ENCODE measurements at regions of chr7 and their contacts with region 1.

Region 1: DNA sequence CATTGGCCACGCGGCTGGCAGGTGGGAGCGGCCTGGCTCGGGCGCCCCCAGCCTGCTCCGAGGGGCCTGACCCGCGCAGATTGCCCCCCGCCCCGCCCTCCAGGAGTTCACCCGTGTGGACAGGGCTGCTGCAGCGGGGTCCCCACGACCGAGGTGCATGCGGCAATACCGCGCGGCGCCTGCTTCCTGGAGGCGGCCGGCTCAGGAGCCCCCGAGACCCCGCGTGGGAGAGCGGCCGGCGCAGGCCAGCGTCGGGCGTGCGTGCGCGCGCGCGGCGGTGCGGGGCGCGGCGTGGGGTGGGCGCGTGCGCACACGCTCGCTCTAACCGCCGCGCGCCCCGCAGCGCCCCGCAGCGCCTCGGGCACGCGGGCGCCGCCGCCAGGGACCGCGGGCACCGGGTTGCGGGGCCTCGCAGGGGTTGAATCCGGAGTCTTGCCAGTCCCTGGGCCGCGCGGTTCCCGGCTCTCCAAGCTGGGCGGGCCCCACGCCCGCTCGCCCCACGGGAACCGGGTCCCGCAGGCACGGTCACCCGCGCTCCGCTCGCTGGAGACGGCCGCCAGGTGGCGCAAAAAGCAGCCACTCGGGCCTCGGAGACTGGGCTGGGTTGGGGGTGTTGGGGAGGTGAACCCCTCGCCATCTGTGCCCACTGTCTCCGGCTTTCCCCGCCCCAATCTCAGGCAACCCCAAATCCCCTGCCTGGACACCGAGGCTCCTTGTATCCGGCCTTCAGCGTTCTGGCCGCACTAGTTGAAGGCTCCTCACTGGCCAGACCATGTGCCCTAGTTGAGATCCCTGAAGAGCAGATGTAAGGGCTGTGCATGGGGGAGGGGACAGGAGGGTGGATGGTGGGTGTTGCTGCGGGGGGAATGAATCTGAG is 1.3 kb upstream of the ACHE start:
- DNase-seq: peak; percentile 87
- H3K4me3 ChIP-seq: peak overlapping the region; percentile 39 to 61; a peak in 3 of 4 replicates
- H3K27ac ChIP-seq: no peak overlapping the region
- H3K4me1 ChIP-seq: peaks cover 7 to 9% of the 10 kb centered on the region in 2 experiments; a peak in 2 of 4 replicates
- H3K27me3 ChIP-seq: peaks cover 54% of the 10 kb centered on the region
- CTCF ChIP-seq: peak; percentile 95
- EP300 ChIP-seq: no peak
- RAD21 ChIP-seq: peak; percentile 60

Region 2: DNA sequence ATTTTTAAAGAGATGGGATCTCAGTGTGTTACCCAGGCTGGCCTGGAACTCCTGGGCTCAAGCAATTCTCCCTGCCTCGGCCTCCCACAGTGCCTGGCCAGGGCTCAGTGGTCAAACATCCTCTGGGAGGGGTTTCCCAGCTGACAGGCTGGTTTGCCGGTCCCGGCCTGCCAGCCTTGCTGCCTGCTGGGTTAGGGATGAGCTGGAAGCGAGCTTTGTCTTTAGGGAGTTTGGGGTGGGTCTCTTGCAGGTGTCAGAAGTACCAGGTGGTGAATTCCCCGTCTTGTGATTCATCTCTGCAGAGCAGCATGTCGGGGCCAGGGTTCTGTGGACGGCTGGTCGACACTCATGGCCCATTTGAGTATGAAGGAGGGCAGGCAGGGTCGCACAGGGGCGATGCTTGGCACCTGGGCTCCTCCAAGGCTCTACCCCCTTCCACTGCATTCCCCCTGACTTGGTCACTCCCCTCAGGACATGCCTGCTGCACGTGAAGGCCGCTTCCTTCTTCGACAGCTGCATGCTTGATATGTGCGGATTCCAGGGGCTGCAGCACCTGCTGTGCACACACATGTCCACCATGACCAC is 133.3 kb before region 1 on chr7:
- CTCF ChIA-PET with region 1: no interaction called
- POLR2A ChIA-PET with region 1: no interaction called
- DNase-seq: no peak
- H3K4me3 ChIP-seq: no peak overlapping the region
- H3K27ac ChIP-seq: no peak overlapping the region
- H3K4me1 ChIP-seq: no peaks in the 10 kb centered on the region
- H3K27me3 ChIP-seq: peaks cover 62% of the 10 kb centered on the region
- CTCF ChIP-seq: no peak
- EP300 ChIP-seq: no peak
- RAD21 ChIP-seq: no peak

Region 3: DNA sequence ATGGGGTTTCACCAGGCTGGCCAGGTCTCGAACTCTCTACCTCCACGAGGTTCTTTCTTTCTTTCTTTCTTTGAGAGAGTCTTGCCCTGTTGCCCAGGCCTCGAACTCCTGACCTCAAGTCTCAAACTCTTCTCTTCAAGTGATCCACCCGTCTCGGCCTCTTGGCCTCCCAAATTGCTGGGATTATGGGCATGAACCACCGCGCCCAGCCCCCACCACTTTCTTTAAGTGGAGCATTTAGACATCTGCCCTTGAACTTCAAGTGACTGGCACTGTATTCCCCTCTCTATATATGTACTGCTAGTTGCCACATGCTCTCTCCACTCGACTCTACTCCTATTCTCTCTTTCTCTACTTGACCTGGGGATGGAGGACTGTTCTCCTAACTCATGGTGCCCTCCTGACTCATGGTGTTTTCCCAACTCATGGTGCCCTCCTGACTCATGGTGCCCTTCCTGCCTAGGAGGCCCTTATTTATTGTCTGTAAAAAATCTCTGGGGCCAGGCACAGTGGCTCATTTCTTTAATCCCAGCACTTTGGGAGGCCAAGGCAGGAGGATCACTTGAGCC is 18.0 kb after region 1 on chr7:
- CTCF ChIA-PET with region 1: interaction called, 19 read pairs
- POLR2A ChIA-PET with region 1: no interaction called
- DNase-seq: no peak
- H3K4me3 ChIP-seq: no peak overlapping the region
- H3K27ac ChIP-seq: no peak overlapping the region
- H3K4me1 ChIP-seq: no peaks in the 10 kb centered on the region
- H3K27me3 ChIP-seq: peaks cover 36% of the 10 kb centered on the region; the same call in 1 of the 2 replicates
- CTCF ChIP-seq: no peak
- EP300 ChIP-seq: no peak
- RAD21 ChIP-seq: no peak

Region 4: GRCh38 chr7:101474178-101474577 is 577.2 kb after region 1 on chr7:
- CTCF ChIA-PET with region 1: no interaction called
- POLR2A ChIA-PET with region 1: no interaction called
- DNase-seq: no peak
- H3K4me3 ChIP-seq: no peak overlapping the region
- H3K27ac ChIP-seq: no peak overlapping the region
- H3K4me1 ChIP-seq: no peaks in the 10 kb centered on the region
- H3K27me3 ChIP-seq: 0 out of 2 replicates have a peak, but pooled peaks cover 8% of the 10 kb centered on the region
- CTCF ChIP-seq: no peak
- EP300 ChIP-seq: no peak
- RAD21 ChIP-seq: no peak

Measured in SK-N-SH (cell line).